ENCODE measurements at regions of chr17 and their contacts with region 1.

Region 1: GRCh38 chr17:1186923-1187771 is 7.4 kb upstream of the ABR start:
- DNase-seq: peak; percentile 80
- ATAC-seq: peak; percentile 95
- H3K4me3 Mint-ChIP-seq: no peak overlapping the region
- H3K27ac Mint-ChIP-seq: no peak overlapping the region
- H3K4me1 Mint-ChIP-seq: peaks cover 18% of the 10 kb centered on the region
- H3K27me3 Mint-ChIP-seq: peaks cover 17% of the 10 kb centered on the region

Region 2: DNA sequence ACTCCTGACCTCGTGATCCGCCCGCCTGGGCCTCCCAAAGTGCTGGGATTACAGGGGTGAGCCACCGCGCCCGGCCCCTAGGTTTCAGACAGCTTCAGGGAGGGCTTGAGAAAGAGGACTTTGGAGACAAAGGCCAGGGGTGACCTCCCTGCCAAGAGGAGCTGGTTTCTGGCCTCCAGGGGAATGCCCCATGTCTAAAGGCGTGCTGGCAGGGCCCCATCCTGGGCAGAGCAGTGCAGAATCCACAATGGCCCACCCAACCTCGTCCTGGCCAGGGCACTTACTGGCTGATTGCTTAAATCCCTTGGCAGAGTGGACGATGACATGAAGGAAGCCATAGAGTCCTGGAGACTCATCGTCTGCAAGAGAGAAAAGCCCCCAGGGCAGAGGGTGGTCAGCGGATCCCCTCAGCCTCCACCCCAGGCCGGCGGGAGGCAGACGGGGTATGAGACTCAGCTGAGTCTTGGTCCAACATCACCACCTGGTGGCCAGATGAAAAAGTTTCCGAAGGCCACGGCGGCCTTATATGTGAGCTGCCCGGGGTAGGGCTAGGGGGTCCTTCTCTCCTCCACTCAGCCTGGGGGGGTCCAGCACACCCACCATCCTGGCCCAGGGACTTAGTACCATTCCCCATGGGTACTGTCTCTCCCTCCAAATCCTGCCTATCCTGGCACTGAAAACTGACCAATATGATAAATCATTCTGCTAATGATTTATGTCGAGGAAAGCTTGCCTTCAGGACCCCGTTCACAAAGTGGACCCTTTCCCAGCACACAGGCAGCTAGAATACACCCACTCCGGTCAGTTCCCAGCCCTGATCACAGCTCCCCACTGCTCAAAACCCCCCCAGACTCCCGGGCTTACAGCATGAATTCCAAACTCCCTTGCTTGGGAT is 131.1 kb before region 1 on chr17:
- CTCF ChIA-PET with region 1: interaction called, 20 read pairs
- DNase-seq: peak; percentile 64
- ATAC-seq: peak; percentile 65
- H3K4me3 Mint-ChIP-seq: no peak overlapping the region
- H3K27ac Mint-ChIP-seq: no peak overlapping the region
- H3K4me1 Mint-ChIP-seq: peaks cover 4% of the 10 kb centered on the region
- H3K27me3 Mint-ChIP-seq: no peaks in the 10 kb centered on the region

Measured in activated CD8-positive, alpha-beta memory T cell treated with anti-CD3 and anti-CD28 coated beads, Interleukin-2, amount 10 ng/mL, durations not matched to agents 7 days and 5 days (primary cell).